ENCODE measurements at regions of chr6 and their contacts with region 1.

Region 1: GRCh38 chr6:73893696-73894095 is 197.7 kb downstream of the CD109 start:
- DNase-seq: no peak
- ATAC-seq: no peak
- H3K4me3 Mint-ChIP-seq: no peak overlapping the region
- H3K27ac Mint-ChIP-seq: no peak overlapping the region
- H3K4me1 Mint-ChIP-seq: no peaks in the 10 kb centered on the region
- H3K27me3 Mint-ChIP-seq: peaks cover 2% of the 10 kb centered on the region

Region 2: GRCh38 chr6:73879501-73880293 is 14.0 kb before region 1 on chr6:
- CTCF ChIA-PET with region 1: no interaction called
- POLR2A ChIA-PET with region 1: no interaction called
- intact Hi-C with region 1: loop called (anchors 1 kb)
- DNase-seq: no peak
- ATAC-seq: no peak
- H3K4me3 Mint-ChIP-seq: no peak overlapping the region
- H3K27ac Mint-ChIP-seq: no peak overlapping the region
- H3K4me1 Mint-ChIP-seq: no peaks in the 10 kb centered on the region
- H3K27me3 Mint-ChIP-seq: no peaks in the 10 kb centered on the region

Region 3: DNA sequence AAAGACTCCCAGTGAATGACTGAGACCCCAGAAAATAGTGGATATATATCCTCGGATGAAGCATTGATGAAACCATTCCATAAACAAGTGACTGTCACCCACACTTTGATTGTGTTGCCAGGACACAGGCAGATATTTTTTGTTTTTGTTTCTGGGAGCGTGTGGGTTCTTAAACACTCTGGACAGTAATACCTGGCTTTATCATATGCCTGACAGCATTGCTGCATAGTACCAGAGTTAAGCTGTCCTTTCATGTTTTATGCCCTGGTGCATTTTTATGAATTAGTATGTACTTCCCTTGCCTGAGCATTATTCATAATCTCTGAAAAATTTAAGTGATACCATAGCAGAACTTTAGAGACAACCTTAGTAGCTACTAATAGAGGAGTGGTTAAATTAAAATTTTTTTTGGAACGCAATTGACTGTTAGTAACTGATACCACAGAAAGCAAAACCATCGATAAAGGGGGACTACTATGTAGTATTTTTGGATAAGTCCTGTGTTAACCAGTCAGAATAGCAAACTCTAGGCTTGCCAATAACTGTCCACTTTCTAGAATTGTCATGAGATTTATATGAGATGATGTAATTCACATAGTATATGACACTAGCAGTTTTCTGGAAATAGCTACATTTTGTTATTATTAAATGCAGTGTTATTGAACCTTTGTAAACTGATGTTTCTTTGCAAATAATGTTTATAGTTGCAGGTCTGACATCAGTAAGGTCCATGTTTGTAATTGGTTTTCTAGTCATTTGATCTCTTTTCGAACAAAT is 1738.4 kb after region 1 on chr6:
- CTCF ChIA-PET with region 1: no interaction called
- POLR2A ChIA-PET with region 1: no interaction called
- intact Hi-C with region 1: no loop called
- DNase-seq: no peak
- ATAC-seq: no peak
- H3K4me3 Mint-ChIP-seq: no peak overlapping the region
- H3K27ac Mint-ChIP-seq: peak overlapping the region; percentile 42
- H3K4me1 Mint-ChIP-seq: peaks cover 3% of the 10 kb centered on the region
- H3K27me3 Mint-ChIP-seq: no peaks in the 10 kb centered on the region

Measured in activated CD4-positive, alpha-beta T cell treated with anti-CD3 and anti-CD28 coated beads for 36 hours (primary cell).